ENCODE measurements at regions of chr4 and their contacts with region 1.

Region 1: DNA sequence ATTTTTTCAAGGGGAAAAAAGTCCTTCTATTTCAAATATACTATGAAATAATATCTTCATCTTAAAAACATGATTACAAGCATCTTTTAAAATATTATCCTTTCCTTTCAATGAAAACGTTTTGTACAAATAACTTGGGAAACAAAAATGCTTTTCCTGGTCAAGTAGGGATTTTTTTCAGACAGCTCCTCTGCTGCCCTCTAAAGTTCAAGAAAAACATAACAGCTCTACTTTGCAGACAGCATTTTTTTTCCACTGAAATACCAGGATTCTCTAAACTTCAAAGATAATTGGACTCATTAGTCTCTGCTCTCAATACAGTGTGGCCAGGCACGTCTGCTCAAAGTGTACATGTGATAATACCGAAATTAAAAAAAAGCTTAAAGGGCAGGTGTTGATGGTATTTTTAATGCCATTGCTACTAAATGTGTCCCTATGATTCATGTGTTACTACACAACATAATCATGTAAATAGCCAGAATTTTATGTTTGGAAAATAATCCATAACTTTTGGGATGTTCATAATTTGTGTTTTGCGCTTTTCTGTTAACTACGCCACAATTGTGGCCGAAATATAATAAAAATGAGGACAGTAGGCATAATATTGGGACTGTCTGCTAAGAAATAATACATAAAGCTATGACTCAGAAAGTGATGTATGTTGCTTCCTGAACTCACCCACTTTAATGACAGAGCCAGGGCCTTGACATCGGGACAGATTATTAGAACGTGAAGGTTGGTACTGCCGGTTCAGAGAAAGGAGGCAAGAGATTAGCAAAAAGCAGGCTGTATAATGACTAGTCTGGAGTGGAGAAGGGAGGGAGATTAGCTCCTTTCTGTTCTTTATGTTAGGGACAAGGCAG is 478.9 kb downstream of the KCNIP4 start:
- DNase-seq: peak; percentile 2
- CTCF ChIP-seq: peak; percentile 36

Region 2: GRCh38 chr4:20773144-20773997 is 696.3 kb before region 1 on chr4:
- in situ Hi-C with region 1: loop called (anchors 25 kb)
- DNase-seq: peak; percentile 29
- CTCF ChIP-seq: peak; percentile 61

Region 3: GRCh38 chr4:22019676-22020075 is 550.0 kb after region 1 on chr4:
- in situ Hi-C with region 1: no loop called
- DNase-seq: no peak
- CTCF ChIP-seq: no peak

Measured in GM13976 (cell line).